ENCODE measurements at regions of chr13 and their contacts with region 1.

Region 1: GRCh38 chr13:95530178-95530577 is 22.3 kb upstream of the CLDN10 start:
- DNase-seq: peak; percentile 99
- H3K4me3 Mint-ChIP-seq: no peak overlapping the region
- H3K27ac Mint-ChIP-seq: peak overlapping the region; percentile 62
- H3K4me1 Mint-ChIP-seq: peaks cover 31% of the 10 kb centered on the region
- H3K27me3 Mint-ChIP-seq: no peaks in the 10 kb centered on the region
- CTCF ChIP-seq: peak; percentile 12

Region 2: DNA sequence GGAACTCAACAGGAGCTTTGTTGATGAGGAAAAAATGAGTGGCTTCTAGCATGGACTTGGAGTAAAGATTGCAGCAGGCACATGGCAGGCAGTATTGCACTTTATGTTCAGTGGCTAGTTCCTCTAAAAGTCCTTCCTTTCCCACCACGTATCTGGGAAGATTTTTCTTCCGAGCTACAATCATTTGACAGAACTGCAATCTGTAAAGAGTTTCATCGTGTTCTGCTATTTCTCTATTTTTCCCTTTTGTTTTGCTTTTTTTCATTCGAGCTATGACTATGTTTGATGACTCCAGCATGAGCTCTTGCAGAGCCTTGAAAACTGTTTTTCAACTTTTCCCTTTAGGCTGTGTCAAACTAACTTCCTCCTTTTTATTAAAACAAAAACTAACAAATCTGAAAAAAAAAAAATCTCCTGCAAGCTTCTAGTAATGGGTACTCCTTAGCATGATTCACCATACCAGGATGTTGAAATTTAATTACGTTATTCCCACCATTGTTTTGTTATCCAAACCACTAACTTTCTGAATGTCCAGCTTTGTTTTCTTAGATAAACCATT is 34.6 kb after region 1 on chr13:
- CTCF ChIA-PET with region 1: interaction called, 10 read pairs
- POLR2A ChIA-PET with region 1: interaction called, 4 read pairs
- intact Hi-C with region 1: no loop called
- DNase-seq: peak; percentile 92
- H3K4me3 Mint-ChIP-seq: peak overlapping the region; percentile 56
- H3K27ac Mint-ChIP-seq: peak overlapping the region; percentile 17
- H3K4me1 Mint-ChIP-seq: peaks cover 26% of the 10 kb centered on the region
- H3K27me3 Mint-ChIP-seq: no peaks in the 10 kb centered on the region
- CTCF ChIP-seq: no peak

Region 3: DNA sequence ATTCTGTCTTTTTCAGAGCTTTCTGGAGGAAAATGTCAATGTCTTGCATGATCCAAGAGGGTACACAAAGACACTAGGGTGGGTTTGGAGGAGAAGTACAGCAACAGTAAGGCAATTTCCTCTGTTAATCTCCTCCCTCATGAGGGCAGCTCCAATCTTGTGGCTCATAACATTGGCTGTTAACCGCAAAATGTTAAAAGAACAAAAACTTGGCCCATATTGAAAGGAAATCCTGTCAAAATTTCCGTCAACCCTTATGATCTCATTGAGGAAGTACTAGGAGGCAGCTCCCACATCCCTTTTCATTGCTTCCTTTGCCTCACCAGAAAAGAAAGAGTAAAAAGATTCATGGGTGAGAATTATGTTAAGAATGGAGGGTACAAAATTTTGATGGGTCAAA is 1452.5 kb after region 1 on chr13:
- CTCF ChIA-PET with region 1: no interaction called
- POLR2A ChIA-PET with region 1: no interaction called
- intact Hi-C with region 1: no loop called
- DNase-seq: no peak
- H3K4me3 Mint-ChIP-seq: no peak overlapping the region
- H3K27ac Mint-ChIP-seq: no peak overlapping the region
- H3K4me1 Mint-ChIP-seq: no peaks in the 10 kb centered on the region
- H3K27me3 Mint-ChIP-seq: peaks cover 22% of the 10 kb centered on the region
- CTCF ChIP-seq: no peak

Measured in MCF 10A (cell line).